A549 (cell line): ENCODE measurements at regions of chr3 and their contacts with region 1.

Region 1: DNA sequence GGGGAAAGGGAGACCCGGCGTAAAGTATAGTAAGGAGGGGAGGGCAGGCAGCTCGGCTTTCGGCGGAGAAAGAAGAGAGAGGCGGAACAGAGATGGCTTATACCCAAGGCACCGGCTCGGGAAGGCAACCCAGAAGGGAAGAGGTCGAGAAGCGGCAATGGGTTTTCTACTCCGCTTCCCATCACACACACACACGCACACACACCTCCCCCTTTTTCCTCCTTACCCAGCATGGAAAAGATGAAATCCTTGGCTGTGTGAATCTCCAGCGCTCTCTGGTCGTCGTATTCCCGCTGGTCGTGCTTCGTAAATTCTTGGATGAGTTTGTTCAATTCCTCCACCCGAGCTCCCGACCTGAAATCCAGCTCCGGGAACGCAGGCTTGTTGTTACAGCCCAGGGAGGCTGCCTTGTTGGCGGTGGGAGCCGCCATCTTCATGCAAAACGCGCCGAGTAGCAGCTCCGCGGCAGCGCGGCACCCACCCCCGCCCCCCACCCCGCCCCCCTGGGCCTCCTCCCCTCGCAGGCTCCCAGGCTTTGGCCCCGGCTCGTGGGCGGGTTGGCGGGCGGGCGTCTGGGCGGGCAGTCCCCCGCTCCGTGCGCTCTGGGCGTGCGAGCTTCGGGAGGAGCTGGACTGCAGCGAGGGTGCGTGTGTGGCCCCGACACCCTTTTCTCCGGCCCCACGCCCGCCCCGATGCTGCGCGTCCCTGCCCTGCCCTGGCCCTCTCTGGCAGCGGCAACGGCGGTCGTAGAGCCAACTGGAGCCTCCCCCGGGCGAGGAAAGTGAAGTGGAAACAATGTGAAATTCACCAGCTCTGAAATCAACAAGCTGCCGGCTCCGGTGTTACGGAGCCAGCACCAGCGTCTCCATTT is at the start of gene MB21D2:
- DNase-seq: peak; percentile 66 to 81
- ATAC-seq: peak; percentile 92 to 94
- H3K4me3 ChIP-seq: peak within 1 kb of the TSS; percentile 85
- H3K27ac ChIP-seq: peak within 1 kb of the TSS; percentile 89 to 96
- H3K4me1 ChIP-seq: peaks cover 44% of the 10 kb centered on the region
- CTCF ChIP-seq: no peak
- EP300 ChIP-seq: no peak
- POLR2A ChIP-seq: peak; percentile 48
- RAD21 ChIP-seq: peak in 1 of 2 experiments; percentile 7; a peak in 2 of 5 replicates
- polyA plus RNA-seq, gene MB21D2: 6.6 and 7.5 TPM in 2 replicates

Region 2: GRCh38 chr3:192864941-192865340 is 52.7 kb before region 1 on chr3:
- CTCF ChIA-PET with region 1: no interaction called
- POLR2A ChIA-PET with region 1: interaction called, 12 read pairs
- DNase-seq: no peak
- ATAC-seq: no peak
- H3K4me3 ChIP-seq: no peak overlapping the region
- H3K27ac ChIP-seq: no peak overlapping the region
- H3K4me1 ChIP-seq: peaks cover 10% of the 10 kb centered on the region; the same call in 2 of the 3 replicates
- CTCF ChIP-seq: no peak
- EP300 ChIP-seq: no peak
- POLR2A ChIP-seq: no peak
- RAD21 ChIP-seq: no peak

Region 3: DNA sequence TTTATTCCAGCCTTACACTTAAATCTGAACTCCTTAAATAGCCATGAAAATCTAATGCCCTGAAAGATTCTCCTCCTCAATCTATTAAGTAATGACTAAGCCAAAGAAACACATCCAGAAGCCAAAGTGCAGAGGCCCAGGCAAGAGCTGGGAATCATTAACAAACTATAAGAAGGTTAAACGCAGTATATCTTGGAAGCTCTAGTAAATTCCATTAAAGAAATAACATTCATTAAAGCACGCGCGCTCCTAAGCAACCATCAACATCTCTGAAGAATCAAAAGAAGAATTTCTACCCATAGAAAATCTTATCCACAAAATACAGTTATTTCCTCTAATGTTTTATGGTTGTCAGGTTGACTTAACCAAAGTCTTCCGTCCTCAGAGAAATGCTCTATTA is 29.4 kb before region 1 on chr3:
- CTCF ChIA-PET with region 1: interaction called, 5 read pairs
- POLR2A ChIA-PET with region 1: interaction called, 12 read pairs
- DNase-seq: peak in 1 of 2 experiments; percentile 51
- ATAC-seq: peak in 1 of 2 experiments; percentile 52; a peak in 3 of 6 replicates
- H3K4me3 ChIP-seq: peak overlapping the region; percentile 36; the same call in 2 of the 3 replicates
- H3K27ac ChIP-seq: peak overlapping the region; percentile 85 to 97
- H3K4me1 ChIP-seq: peaks cover 74% of the 10 kb centered on the region
- CTCF ChIP-seq: no peak
- EP300 ChIP-seq: no peak
- POLR2A ChIP-seq: no peak
- RAD21 ChIP-seq: no peak

Region 4: DNA sequence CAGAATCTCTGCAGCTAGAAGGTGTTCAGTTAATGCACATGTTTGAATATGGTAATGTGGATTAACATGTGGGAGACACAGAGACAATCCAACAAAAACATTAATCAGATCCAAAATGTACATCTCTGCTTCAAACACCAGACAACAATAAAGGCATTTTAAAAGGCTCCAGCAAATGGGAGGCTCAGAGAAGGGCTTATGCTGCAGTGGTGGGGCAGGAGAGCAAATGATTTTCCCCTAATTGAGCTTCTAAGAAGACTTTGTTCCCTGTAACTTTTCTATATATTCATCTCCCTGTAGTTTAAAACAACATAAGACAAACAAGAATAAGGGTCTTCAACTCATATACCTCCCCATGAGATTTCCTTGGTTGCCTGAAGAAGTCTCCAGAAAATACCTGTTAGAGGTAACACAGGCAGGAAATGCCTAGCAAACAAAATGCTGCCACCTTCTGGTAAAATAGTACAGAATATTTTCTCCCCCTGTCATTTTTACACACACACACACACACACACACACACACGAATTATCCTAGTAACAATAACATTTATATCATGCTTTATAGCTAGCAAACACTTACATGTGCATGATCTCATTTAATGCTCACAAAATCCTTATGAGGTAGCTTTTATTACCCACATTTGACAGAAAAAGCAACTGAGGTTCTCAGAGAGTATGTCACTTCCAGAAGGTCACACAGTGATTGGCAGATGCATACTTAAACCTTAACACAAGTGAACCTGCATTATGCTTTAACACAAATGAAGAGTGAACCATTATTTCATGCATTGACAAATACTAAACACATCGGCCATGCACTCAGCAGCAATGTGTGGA is 123.4 kb after region 1 on chr3:
- CTCF ChIA-PET with region 1: interaction called, 11 read pairs
- POLR2A ChIA-PET with region 1: no interaction called
- DNase-seq: peak; percentile 15 to 55
- ATAC-seq: peak; percentile 34 to 81; a peak in 4 of 6 replicates
- H3K4me3 ChIP-seq: no peak overlapping the region
- H3K27ac ChIP-seq: no peak overlapping the region; a peak in 1 of 6 replicates
- H3K4me1 ChIP-seq: 0 out of 3 replicates have a peak, but pooled peaks cover 3% of the 10 kb centered on the region
- CTCF ChIP-seq: peak; percentile 71
- EP300 ChIP-seq: no peak
- POLR2A ChIP-seq: no peak
- RAD21 ChIP-seq: peak; percentile 85